ENCODE measurements at regions of chr1 and their contacts with region 1.

Region 1: DNA sequence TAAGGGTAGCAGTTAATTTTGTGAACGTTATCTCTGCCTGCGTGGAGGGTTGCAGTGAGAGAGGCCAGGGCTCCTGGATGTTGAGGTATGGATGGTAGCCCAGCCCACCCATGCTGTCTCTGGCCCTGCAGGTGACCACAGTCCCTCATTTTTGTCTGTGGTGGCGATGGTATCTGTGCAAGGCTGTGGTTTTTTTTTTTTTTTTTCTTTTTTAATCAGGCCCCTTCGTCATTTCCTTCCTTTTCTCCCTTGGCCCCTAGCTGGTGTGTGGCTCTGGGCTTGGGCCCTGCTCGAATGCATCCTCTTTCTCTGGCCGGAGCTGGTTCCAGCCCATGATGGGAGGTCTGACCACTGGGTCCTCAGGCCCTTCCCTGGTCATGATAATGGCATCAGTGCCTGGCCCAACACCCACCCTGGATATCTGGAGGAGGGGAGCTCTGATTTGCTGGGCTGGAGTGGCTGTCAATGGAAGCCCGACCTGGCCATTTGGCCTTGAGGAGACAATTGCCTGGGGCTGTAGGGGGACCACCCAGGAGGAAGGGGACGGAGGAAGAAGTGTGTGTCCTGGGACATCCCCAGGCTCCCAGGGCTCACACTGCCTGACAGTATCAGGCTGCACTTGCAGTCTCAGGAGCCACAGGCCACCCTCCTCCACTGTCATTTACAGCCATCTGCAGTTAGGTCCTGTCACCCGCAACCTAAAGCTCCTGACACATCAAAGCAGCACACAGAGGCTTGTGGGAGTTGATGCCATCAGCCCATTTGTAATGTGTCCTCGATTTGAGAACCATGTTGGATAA is 8.1 kb upstream of the RNF187 start:
- DNase-seq: peak; percentile 59
- H3K4me3 Mint-ChIP-seq: peak overlapping the region; percentile 48
- H3K27ac Mint-ChIP-seq: peak overlapping the region; percentile 91
- H3K4me1 Mint-ChIP-seq: peaks cover 62% of the 10 kb centered on the region
- H3K27me3 Mint-ChIP-seq: peaks cover 2% of the 10 kb centered on the region

Region 2: DNA sequence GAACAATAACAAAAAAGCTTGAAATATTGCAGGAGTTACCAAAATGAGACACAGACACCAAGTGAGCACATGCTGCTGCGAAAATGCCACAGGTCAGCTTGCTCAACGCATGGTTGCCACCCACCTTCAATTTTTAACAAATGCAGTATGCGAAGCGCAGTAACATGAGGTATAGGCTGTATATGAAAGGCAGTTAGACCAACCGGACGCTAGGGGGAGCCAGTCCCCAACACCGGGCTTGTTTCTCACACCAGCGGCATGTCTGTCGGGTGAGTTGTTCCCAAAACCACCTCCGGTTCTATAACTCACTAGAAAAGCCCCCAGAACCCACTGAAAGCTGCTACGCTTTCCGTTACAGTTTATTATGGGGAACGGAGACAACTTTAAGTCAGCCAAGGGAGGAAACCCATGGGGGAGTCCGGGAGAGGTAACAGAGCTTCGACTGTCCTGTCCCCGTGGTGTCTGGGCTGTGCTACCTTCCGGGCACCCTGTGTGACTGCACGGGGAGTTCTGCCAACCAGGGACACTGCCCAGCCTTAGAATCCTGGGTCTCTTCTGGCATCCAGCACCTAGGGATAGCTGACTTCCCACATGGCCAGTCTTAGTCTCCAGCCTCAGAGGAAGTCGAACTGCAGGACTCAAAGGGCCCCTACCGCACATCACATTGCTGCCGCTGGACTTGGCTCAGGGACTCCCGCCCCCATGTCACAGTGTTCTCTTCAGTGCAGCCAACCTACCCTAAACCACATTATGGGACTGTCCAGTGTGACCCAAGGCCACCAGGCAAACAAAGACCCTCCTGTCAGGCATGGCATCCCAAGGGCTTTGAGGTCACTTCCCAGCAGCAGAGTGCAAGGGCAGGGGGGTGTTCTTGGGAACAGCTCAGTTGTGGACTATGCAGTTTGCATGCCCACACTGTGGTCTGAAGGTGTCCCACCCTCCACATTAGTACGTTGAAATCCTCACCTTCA is 22.1 kb after region 1 on chr1:
- CTCF ChIA-PET with region 1: interaction called, 12 read pairs
- POLR2A ChIA-PET with region 1: no interaction called
- DNase-seq: peak; percentile 90
- H3K4me3 Mint-ChIP-seq: peak overlapping the region; percentile 40
- H3K27ac Mint-ChIP-seq: peak overlapping the region; percentile 41
- H3K4me1 Mint-ChIP-seq: peaks cover 38% of the 10 kb centered on the region
- H3K27me3 Mint-ChIP-seq: no peaks in the 10 kb centered on the region

Region 3: GRCh38 chr1:228721402-228721801 is 242.3 kb after region 1 on chr1:
- CTCF ChIA-PET with region 1: no interaction called
- POLR2A ChIA-PET with region 1: no interaction called
- DNase-seq: no peak
- H3K4me3 Mint-ChIP-seq: no peak overlapping the region
- H3K27ac Mint-ChIP-seq: no peak overlapping the region
- H3K4me1 Mint-ChIP-seq: no peaks in the 10 kb centered on the region
- H3K27me3 Mint-ChIP-seq: peaks cover 10% of the 10 kb centered on the region